ENCODE measurements at regions of chr5 and their contacts with region 1.

Region 1: DNA sequence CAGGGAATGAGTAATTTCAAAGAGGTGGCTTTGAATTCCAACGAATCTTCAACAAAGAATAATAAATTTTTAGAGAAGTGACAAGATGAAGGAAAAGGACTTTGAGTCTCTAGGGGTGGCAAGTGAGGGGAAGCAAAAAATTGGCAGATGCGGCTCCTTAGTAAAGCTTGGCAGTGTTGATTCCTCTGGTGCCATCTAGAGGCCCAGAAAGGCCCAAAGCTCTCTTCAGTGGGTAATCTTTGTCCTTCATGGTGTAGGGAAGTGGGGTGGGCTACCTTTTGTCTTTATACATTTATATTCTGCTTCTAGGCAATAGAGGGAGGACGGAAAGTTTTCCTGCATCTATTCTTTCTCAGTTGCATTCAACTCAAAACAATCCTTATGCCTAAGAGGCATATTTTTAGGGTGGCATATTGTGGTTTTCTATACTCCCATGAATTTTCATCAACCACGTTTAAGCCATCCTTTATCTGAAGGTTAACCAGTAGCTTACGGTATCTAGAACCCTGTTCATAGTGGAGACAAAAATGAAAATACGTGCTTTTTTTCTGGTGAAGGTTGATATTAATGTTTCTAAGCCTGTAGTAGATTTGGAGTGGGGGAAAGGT is 17.5 kb upstream of the ROPN1L start:
- DNase-seq: peak in 2 of 5 donors; percentile 33 to 43
- ATAC-seq: peak in 3 of 4 donors; percentile 65 to 76 (median 67)
- H3K4me3 ChIP-seq: no peak overlapping the region
- H3K27ac ChIP-seq: no peak overlapping the region
- H3K4me1 ChIP-seq: peaks cover 0 to 31% (median 0%) of the 10 kb centered on the region in 12 donors
- H3K27me3 ChIP-seq: no peaks in the 10 kb centered on the region
- CTCF ChIP-seq: peak; percentile 18 to 63 (median 46)
- POLR2A ChIP-seq: no peak

Region 2: DNA sequence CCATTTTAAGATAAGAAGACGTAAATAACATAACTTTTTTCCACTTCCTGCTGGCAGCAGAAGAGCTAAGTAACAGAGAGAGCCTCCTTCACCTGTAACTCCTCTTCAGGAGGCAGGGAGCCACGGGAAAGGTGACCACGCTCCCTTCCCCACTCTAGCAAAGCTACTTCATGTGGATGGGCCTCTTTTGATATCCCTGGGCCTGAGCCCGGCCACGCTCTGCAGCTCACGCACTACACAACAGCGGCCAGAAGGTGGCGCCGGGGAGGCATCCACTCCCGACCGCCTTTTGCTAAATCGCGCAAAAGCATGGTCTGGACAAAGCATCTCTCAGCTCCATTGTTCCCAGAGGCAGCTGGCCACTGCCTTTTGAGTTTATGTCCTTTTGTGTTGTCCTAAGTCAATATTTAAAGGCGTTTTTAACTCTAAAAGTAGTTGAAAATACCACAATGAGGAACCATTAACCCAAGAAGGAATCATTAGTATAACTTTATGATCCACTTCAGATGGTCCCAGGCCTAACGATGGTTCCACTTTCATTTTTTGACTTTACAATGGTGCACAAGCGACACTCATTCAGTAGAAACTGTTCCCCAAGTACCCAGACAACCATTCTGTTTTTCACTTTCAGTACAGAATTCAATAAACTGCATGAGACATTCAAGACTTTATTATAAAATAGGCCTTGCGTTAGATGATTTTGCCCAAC is 140.1 kb before region 1 on chr5:
- intact Hi-C with region 1: loop called in 9 of 10 experiments (anchors 1 to 10 kb)
- DNase-seq: peak; percentile 81 to 91 (median 85)
- ATAC-seq: peak; percentile 67 to 89 (median 86)
- H3K4me3 ChIP-seq: no peak overlapping the region
- H3K27ac ChIP-seq: no peak overlapping the region
- H3K4me1 ChIP-seq: peaks cover 0 to 17% (median 6%) of the 10 kb centered on the region in 12 donors
- H3K27me3 ChIP-seq: no peaks in the 10 kb centered on the region
- CTCF ChIP-seq: peak; percentile 82 to 98 (median 94)
- POLR2A ChIP-seq: no peak

Region 3: GRCh38 chr5:10307206-10308148 is 116.8 kb before region 1 on chr5 and contains the start of gene CMBL:
- intact Hi-C with region 1: loop called in 1 of 10 experiments (anchors 10 kb)
- DNase-seq: peak; percentile 37 to 76 (median 52)
- ATAC-seq: peak; percentile 75 to 86 (median 80)
- H3K4me3 ChIP-seq: peak within 1 kb of the TSS in 11 of 12 donors; percentile 53 to 81 (median 67)
- H3K27ac ChIP-seq: peak within 1 kb of the TSS; percentile 45 to 90 (median 81)
- H3K4me1 ChIP-seq: peaks cover 0 to 39% (median 12%) of the 10 kb centered on the region in 12 donors
- H3K27me3 ChIP-seq: no peaks in the 10 kb centered on the region
- CTCF ChIP-seq: no peak
- POLR2A ChIP-seq: no peak
- total RNA-seq, gene CMBL: 12.4 to 53.5 (median 29.0) TPM

Region 4: GRCh38 chr5:10317825-10318682 is 106.2 kb before region 1 on chr5:
- intact Hi-C with region 1: loop called in 2 of 10 experiments (anchors 5 to 10 kb)
- DNase-seq: no peak
- ATAC-seq: no peak
- H3K4me3 ChIP-seq: no peak overlapping the region
- H3K27ac ChIP-seq: no peak overlapping the region
- H3K4me1 ChIP-seq: no peaks in the 10 kb centered on the region
- H3K27me3 ChIP-seq: no peaks in the 10 kb centered on the region
- CTCF ChIP-seq: no peak
- POLR2A ChIP-seq: no peak

Measured in heart left ventricle (tissue), 16 donors.